ENCODE measurements at regions of chr21 and their contacts with region 1.

Region 1: GRCh38 chr21:36419996-36420395 is 34.8 kb downstream of the CHAF1B start:
- DNase-seq: peak; percentile 66
- H3K4me3 ChIP-seq: no peak overlapping the region
- H3K27ac ChIP-seq: no peak overlapping the region
- H3K4me1 ChIP-seq: no peaks in the 10 kb centered on the region
- H3K27me3 ChIP-seq: no peaks in the 10 kb centered on the region
- CTCF ChIP-seq: peak; percentile 80 to 84

Region 2: GRCh38 chr21:36141513-36141925 is 278.5 kb before region 1 on chr21:
- CTCF ChIA-PET with region 1: no interaction called
- dilution Hi-C with region 1: no loop called
- in situ Hi-C with region 1: no loop called
- intact Hi-C with region 1: loop called (anchors 1 kb)
- DNase-seq: peak; percentile 97
- H3K4me3 ChIP-seq: no peak overlapping the region
- H3K27ac ChIP-seq: peak overlapping the region; percentile 76
- H3K4me1 ChIP-seq: peaks cover 5% of the 10 kb centered on the region
- H3K27me3 ChIP-seq: no peaks in the 10 kb centered on the region
- CTCF ChIP-seq: peak; percentile 73 to 83

Region 3: DNA sequence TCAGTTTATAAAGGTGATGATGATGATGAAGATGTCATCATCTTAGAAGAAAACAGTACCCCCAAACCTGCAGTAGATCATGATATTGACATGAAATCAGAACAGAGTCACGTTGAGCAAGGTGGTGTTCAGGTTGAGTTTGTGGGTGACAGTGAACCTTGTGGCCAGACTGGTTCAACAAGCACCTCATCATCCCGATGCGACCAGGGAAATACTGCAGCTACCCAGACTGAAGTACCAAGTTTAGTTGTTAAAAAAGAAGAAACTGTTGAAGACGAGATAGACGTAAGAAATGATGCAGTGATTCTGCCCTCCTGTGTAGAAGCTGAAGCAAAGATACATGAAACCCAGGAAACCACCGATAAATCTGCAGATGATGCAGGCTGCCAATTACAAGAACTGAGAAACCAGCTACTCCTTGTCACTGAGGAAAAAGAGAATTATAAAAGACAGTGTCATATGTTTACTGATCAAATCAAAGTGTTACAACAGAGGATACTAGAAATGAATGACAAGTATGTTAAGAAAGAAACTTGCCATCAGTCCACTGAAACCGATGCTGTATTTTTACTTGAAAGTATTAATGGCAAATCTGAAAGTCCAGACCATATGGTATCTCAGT is 50.8 kb before region 1 on chr21:
- CTCF ChIA-PET with region 1: no interaction called
- dilution Hi-C with region 1: no loop called
- in situ Hi-C with region 1: no loop called
- intact Hi-C with region 1: no loop called
- DNase-seq: no peak
- H3K4me3 ChIP-seq: no peak overlapping the region
- H3K27ac ChIP-seq: no peak overlapping the region
- H3K4me1 ChIP-seq: no peaks in the 10 kb centered on the region
- H3K27me3 ChIP-seq: no peaks in the 10 kb centered on the region
- CTCF ChIP-seq: no peak

Region 4: DNA sequence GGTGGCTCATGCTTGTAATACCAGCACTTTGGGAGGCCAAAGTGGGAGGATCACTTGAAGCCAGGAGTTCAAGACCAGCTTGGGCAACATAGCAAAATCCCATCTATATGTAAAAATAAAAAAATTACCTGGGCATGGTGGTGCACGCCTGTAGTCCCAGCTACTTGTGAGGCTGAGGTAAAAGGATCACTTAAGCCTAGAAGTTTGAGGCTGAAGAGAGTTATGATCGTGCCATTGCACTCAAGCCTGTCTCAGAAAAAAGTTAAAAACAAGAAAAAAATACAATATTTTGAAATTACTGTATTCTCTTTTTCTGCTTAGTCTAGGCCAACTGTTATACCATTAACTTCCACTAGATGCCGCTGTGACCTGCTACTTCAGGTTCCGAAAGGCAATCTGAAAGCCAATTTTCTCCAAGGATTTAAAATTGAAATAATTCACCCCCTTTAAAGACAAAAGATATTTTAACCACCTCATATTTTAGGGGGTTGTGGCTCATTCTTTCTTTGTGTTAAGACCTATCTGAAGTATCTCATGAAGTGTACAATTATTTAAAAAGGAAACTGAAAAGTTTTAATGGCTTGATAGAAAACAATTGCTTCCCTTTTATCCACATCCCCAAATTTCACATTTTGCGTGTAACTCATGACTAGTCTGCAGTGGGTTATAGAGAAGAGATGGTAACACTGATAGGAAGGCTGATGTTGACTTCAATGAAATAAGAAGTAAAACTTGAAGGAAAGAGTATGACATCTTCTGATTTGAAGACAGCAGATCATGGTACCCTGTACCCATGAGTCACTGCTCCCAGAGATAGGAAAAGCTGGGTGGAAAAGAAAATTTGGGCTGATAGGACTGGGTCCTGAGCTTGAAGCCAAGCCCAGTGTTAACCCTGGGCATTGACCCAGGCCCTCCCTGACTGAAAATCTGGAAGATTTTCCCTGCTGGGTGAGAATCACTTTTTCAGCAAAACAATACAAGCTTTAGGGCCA is 84.4 kb after region 1 on chr21:
- CTCF ChIA-PET with region 1: no interaction called
- dilution Hi-C with region 1: no loop called
- in situ Hi-C with region 1: no loop called
- intact Hi-C with region 1: loop called (anchors 1 kb)
- DNase-seq: peak; percentile 11
- H3K4me3 ChIP-seq: no peak overlapping the region
- H3K27ac ChIP-seq: no peak overlapping the region
- H3K4me1 ChIP-seq: peaks cover 9% of the 10 kb centered on the region
- H3K27me3 ChIP-seq: no peaks in the 10 kb centered on the region
- CTCF ChIP-seq: peak; percentile 78 to 86

Region 5: DNA sequence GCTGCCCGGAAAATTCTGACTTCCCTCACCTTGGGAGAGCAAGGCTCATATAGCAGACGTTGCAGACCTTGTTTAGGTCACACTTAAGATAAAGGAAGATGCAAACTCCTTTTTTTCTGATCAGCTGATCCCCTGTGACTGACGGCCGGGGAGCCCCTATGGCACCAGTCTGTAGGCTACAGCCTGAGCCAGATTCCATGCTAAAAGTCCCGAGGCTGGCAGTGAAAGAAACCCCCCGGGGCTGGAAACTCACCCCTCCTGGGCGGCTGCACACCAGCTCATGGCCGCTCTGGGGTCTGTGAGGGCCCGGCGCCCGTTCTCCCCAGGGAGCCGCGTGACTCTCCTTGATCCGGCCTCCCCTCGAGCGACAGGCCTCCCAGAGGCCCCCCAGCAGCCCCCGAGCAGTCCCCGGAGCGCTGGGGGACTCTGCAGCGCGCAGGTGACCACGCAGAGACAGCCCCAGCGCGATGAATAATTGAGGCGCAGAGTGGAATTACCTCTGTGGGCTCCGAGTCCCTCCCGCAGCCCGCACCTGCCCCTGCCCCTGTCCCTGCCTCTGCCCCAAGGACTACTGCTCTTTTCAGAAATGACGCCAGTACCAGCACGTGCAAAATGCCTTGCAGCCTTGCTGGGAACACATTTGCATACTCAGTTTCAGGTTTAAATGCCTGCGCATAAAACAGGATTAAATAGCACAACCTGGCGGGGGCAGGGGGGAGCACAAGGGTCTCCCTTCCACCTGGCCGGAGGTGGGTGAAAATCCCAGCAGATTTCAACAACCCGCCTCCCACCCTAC is 122.5 kb after region 1 on chr21:
- CTCF ChIA-PET with region 1: no interaction called
- dilution Hi-C with region 1: no loop called
- in situ Hi-C with region 1: no loop called
- intact Hi-C with region 1: no loop called
- DNase-seq: no peak
- H3K4me3 ChIP-seq: no peak overlapping the region
- H3K27ac ChIP-seq: no peak overlapping the region
- H3K4me1 ChIP-seq: no peaks in the 10 kb centered on the region
- H3K27me3 ChIP-seq: peaks cover 18% of the 10 kb centered on the region
- CTCF ChIP-seq: peak in 1 of 2 donors; percentile 23

Region 6: GRCh38 chr21:36753556-36753955 is 333.6 kb after region 1 on chr21:
- CTCF ChIA-PET with region 1: no interaction called
- dilution Hi-C with region 1: no loop called
- in situ Hi-C with region 1: no loop called
- intact Hi-C with region 1: loop called (anchors 1 kb)
- DNase-seq: peak; percentile 27
- H3K4me3 ChIP-seq: no peak overlapping the region
- H3K27ac ChIP-seq: no peak overlapping the region
- H3K4me1 ChIP-seq: peaks cover 8% of the 10 kb centered on the region
- H3K27me3 ChIP-seq: no peaks in the 10 kb centered on the region
- CTCF ChIP-seq: no peak

Region 7: GRCh38 chr21:36835383-36835795 is 415.4 kb after region 1 on chr21:
- CTCF ChIA-PET with region 1: no interaction called
- dilution Hi-C with region 1: no loop called
- in situ Hi-C with region 1: no loop called
- intact Hi-C with region 1: no loop called
- DNase-seq: no peak
- H3K4me3 ChIP-seq: no peak overlapping the region
- H3K27ac ChIP-seq: no peak overlapping the region
- H3K4me1 ChIP-seq: no peaks in the 10 kb centered on the region
- H3K27me3 ChIP-seq: no peaks in the 10 kb centered on the region
- CTCF ChIP-seq: no peak

Region 8: GRCh38 chr21:36989699-36990507 is 569.9 kb after region 1 on chr21:
- CTCF ChIA-PET with region 1: no interaction called
- dilution Hi-C with region 1: no loop called
- in situ Hi-C with region 1: no loop called
- intact Hi-C with region 1: loop called (anchors 1 kb)
- DNase-seq: peak; percentile 87
- H3K4me3 ChIP-seq: peak overlapping the region; percentile 55 to 66 (median 65)
- H3K27ac ChIP-seq: peak overlapping the region; percentile 78
- H3K4me1 ChIP-seq: peaks cover 13% of the 10 kb centered on the region
- H3K27me3 ChIP-seq: no peaks in the 10 kb centered on the region
- CTCF ChIP-seq: peak; percentile 48 to 57